ENCODE measurements at regions of chr16 and their contacts with region 1.

Region 1: GRCh38 chr16:69186642-69187445 is at the start of gene SNTB2:
- DNase-seq: no peak
- H3K4me3 ChIP-seq: peak within 1 kb of the TSS; percentile 57 to 68
- H3K27ac ChIP-seq: peak within 1 kb of the TSS; percentile 83
- H3K4me1 ChIP-seq: peaks cover 62% of the 10 kb centered on the region
- H3K27me3 ChIP-seq: no peaks in the 10 kb centered on the region
- CTCF ChIP-seq: no peak
- POLR2A ChIP-seq: peak; percentile 25 to 93
- total RNA-seq, gene SNTB2: 50.8 TPM

Region 2: DNA sequence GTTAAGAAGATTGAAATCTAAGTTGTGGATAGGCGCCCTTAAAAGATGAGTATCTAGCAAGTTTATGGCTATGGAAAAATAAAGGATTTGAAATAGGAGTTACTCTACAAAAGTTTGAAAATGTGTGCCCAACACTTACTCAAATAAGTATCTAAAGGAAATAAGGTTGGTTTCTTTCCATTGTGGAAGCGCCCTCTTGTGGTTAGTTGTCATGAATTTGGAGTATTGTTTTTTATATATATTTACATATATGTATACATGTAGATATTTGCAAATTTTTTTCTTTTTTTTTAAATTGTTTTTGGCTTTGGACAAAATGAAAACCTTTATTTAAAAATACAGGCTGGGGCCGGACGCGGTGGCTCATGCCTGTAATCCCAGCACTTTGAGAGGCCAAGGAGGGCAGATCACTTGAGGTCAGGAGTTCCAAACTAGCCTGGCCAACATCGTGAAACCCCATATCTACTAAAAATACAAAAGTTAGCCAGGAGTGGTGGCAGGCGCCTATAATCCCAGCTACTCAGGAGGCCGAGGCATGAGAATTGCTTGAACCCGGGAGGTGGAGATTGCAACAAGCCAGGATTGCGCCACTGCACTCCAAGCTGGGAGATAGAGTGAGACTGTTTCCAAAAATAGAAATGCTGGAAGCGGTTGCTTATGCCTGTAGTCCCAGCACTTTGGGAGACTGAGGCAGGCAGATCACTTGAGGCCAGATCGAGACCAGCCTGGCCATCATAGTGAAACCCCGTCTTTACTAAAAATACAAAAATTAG is 100.3 kb after region 1 on chr16:
- intact Hi-C with region 1: loop called (anchors 10 kb)
- DNase-seq: no peak
- H3K4me3 ChIP-seq: no peak overlapping the region
- H3K27ac ChIP-seq: peak overlapping the region; percentile 45
- H3K4me1 ChIP-seq: no peaks in the 10 kb centered on the region
- H3K27me3 ChIP-seq: no peaks in the 10 kb centered on the region
- CTCF ChIP-seq: peak in 2 of 3 experiments; percentile 39 to 72
- POLR2A ChIP-seq: no peak